Aorta (tissue), 5 donors: ENCODE measurements at regions of chr2 and their contacts with region 1.

Region 1: GRCh38 chr2:203052539-203052938 is 37.9 kb downstream of the NBEAL1 start:
- DNase-seq: no peak
- ATAC-seq: no peak
- H3K4me3 ChIP-seq: no peak overlapping the region
- H3K27ac ChIP-seq: no peak overlapping the region
- H3K4me1 ChIP-seq: peaks cover 3 to 4% of the 10 kb centered on the region in 2 donors
- H3K27me3 ChIP-seq: no peaks in the 10 kb centered on the region

Region 2: DNA sequence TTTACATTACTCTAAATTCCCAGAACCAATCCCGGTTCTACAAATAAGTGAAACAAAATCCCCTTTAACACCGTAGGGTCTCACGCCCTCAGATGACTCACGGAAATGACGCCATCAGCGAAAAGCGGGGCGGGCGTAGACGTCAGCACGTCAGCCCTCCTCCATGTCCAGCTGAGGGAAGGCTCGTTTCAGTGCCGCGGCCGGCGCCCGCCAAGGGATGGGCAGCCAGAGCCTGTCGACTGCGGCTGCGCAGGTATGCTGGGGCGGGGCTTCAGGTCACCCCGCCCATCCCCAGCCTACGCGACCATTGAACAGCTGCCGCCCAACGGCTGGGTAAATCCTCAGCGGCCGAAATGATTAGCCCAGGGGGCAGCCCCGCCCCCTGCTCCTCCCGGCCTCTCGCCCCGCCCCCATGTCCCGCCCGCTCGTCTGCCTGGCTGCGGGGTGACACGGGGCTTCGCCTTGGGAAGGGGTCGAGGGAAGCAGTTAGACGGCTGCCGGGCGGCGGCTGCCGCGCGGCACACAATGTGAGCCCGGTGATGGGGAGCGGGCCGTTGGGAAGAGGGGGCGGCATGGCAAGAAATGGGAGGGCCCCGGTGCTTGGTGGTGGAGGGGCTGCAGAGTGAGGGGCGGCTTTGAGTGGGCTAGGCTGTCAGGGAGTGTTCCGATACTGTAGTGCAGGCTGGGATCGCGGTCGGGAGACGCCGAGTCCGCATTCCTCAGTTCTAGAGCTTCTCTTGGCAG is 37.9 kb before region 1 on chr2 and contains the start of gene NBEAL1:
- intact Hi-C with region 1: loop called in 1 of 2 experiments (anchors 5 kb)
- DNase-seq: peak; percentile 99
- ATAC-seq: peak; percentile 99
- H3K4me3 ChIP-seq: peak within 1 kb of the TSS; percentile 77 to 96
- H3K27ac ChIP-seq: peak within 1 kb of the TSS; percentile 94 to 98
- H3K4me1 ChIP-seq: no peaks in the 10 kb centered on the region
- H3K27me3 ChIP-seq: no peaks in the 10 kb centered on the region
- total RNA-seq, gene NBEAL1: 68.3 to 178 TPM

Region 3: GRCh38 chr2:203177361-203177760 is 124.8 kb after region 1 on chr2:
- intact Hi-C with region 1: no loop called
- DNase-seq: no peak
- ATAC-seq: no peak
- H3K4me3 ChIP-seq: no peak overlapping the region
- H3K27ac ChIP-seq: no peak overlapping the region
- H3K4me1 ChIP-seq: no peaks in the 10 kb centered on the region
- H3K27me3 ChIP-seq: no peaks in the 10 kb centered on the region